ENCODE measurements at regions of chr1 and their contacts with region 1.

Region 1: GRCh38 chr1:32761253-32761880 is 55.8 kb downstream of the YARS1 start:
- DNase-seq: peak; percentile 98
- H3K4me3 ChIP-seq: peak overlapping the region in 2 of 3 experiments; percentile 5 to 28
- H3K27ac ChIP-seq: peak overlapping the region; percentile 98
- H3K4me1 ChIP-seq: peaks cover 71% of the 10 kb centered on the region
- H3K27me3 ChIP-seq: no peaks in the 10 kb centered on the region
- CTCF ChIP-seq: no peak

Region 2: GRCh38 chr1:32724678-32725614 is 36.4 kb before region 1 on chr1:
- CTCF ChIA-PET with region 1: no interaction called
- dilution Hi-C with region 1: no loop called
- in situ Hi-C with region 1: no loop called
- intact Hi-C with region 1: loop called (anchors 2 kb)
- DNase-seq: peak; percentile 93
- H3K4me3 ChIP-seq: no peak overlapping the region
- H3K27ac ChIP-seq: peak overlapping the region; percentile 37
- H3K4me1 ChIP-seq: peaks cover 15% of the 10 kb centered on the region
- H3K27me3 ChIP-seq: no peaks in the 10 kb centered on the region
- CTCF ChIP-seq: no peak

Region 3: GRCh38 chr1:32741413-32742198 is 19.8 kb before region 1 on chr1:
- CTCF ChIA-PET with region 1: no interaction called
- dilution Hi-C with region 1: no loop called
- in situ Hi-C with region 1: no loop called
- intact Hi-C with region 1: loop called (anchors 1 kb)
- DNase-seq: no peak
- H3K4me3 ChIP-seq: peak overlapping the region; percentile 88 to 92 (median 91)
- H3K27ac ChIP-seq: peak overlapping the region; percentile 62
- H3K4me1 ChIP-seq: peaks cover 22% of the 10 kb centered on the region
- H3K27me3 ChIP-seq: no peaks in the 10 kb centered on the region
- CTCF ChIP-seq: peak in 1 of 2 donors; percentile 51

Region 4: DNA sequence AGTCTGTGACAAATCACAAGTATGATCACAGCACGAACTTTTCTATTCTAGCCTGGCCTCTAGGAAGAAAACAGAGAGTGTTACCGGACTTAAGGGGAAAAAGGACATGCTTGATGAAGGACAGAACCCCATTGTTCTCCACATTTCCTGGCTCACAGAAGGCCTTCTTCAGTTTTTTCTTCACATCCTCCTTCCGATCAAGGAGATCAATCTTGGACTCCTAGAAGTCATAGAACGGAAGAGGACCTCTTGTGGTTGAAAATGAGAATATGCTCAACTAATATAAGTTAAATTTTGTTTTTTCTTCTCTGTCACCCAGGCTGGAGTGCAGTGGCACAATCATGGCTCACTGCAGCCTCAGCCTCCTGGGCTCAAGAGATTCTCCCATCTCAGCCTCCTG is 25.5 kb after region 1 on chr1:
- CTCF ChIA-PET with region 1: no interaction called
- dilution Hi-C with region 1: no loop called
- in situ Hi-C with region 1: no loop called
- intact Hi-C with region 1: loop called (anchors 2 kb)
- DNase-seq: no peak
- H3K4me3 ChIP-seq: no peak overlapping the region
- H3K27ac ChIP-seq: no peak overlapping the region
- H3K4me1 ChIP-seq: peaks cover 13% of the 10 kb centered on the region
- H3K27me3 ChIP-seq: no peaks in the 10 kb centered on the region
- CTCF ChIP-seq: peak; percentile 9 to 24

Measured in mammary epithelial cell (primary cell).